BJ (cell line): ENCODE measurements at regions of chr4 and their contacts with region 1.

Region 1: GRCh38 chr4:67909905-67910584 is 26.2 kb upstream of the TMPRSS11D start:
- DNase-seq: no peak
- H3K4me3 ChIP-seq: no peak overlapping the region
- H3K27me3 ChIP-seq: no peaks in the 10 kb centered on the region
- CTCF ChIP-seq: peak; percentile 55

Region 2: GRCh38 chr4:67746797-67747495 is 163.1 kb before region 1 on chr4:
- CTCF ChIA-PET with region 1: no interaction called
- POLR2A ChIA-PET with region 1: no interaction called
- DNase-seq: no peak
- H3K4me3 ChIP-seq: no peak overlapping the region
- H3K27me3 ChIP-seq: no peaks in the 10 kb centered on the region
- CTCF ChIP-seq: peak; percentile 58

Region 3: DNA sequence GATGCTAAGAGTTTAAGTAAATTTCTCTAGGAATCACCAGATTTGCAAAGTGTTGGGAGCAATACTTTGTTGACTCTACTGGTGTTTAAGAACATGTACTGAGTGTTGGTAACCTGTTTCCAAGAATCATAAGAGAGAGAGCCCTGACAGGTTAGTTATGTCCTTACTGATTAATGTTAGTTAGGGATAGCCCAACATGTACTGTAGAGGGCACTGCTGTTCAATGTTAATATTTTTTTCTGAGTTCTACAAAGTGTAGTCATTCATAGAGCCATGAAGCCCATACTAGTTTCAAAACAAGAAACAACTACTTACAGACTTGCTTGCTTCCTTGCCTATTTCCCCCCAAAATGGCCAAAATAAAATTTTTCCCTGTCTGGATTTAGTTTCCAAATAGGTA is 38.2 kb before region 1 on chr4:
- CTCF ChIA-PET with region 1: interaction called, 23 read pairs
- POLR2A ChIA-PET with region 1: no interaction called
- DNase-seq: no peak
- H3K4me3 ChIP-seq: no peak overlapping the region
- H3K27me3 ChIP-seq: no peaks in the 10 kb centered on the region
- CTCF ChIP-seq: peak; percentile 61

Region 4: DNA sequence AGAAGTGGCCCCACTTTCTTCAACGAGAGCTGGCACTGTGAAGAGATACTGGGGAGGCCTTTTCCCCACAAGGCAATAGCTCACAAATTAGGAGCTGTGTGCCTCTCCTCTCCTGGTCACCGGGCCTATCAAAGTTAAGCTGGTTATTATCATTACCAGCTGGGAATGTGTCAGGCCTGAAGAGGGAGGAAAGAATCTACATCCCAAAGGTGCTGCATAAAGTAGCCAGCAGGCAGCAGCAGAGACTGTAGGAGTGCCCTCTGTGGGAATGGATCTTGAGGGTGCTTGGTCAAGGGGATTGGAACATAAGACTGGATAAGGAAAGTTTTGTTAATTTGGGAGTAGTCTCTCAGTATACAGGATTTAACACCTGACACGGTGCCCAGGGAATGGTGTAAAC is 17.1 kb before region 1 on chr4:
- CTCF ChIA-PET with region 1: interaction called, 27 read pairs
- POLR2A ChIA-PET with region 1: no interaction called
- DNase-seq: no peak
- H3K4me3 ChIP-seq: no peak overlapping the region
- H3K27me3 ChIP-seq: no peaks in the 10 kb centered on the region
- CTCF ChIP-seq: 0 out of 2 replicates have a peak, but pooled peaks have one; percentile 19

Region 5: DNA sequence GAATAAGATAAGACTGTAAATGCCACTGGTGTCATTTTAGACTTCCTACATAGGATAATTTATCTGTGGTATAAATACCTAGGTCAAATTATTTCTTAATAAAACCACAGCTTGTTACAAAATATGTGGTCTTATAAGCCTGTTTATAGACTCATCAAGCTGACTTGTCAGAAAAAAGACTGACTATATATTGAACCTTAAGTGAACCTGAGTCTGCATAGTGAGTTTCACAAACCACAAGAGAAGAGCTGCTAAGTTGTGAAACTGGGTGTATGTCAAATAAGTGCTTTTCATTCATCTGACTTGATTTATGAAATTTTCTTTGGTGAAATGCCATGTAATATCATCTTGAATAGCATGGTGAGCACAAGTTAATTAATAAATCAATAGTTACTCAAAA is 101.6 kb after region 1 on chr4:
- CTCF ChIA-PET with region 1: no interaction called
- POLR2A ChIA-PET with region 1: no interaction called
- DNase-seq: no peak
- H3K4me3 ChIP-seq: no peak overlapping the region
- H3K27me3 ChIP-seq: no peaks in the 10 kb centered on the region
- CTCF ChIP-seq: no peak

Region 6: DNA sequence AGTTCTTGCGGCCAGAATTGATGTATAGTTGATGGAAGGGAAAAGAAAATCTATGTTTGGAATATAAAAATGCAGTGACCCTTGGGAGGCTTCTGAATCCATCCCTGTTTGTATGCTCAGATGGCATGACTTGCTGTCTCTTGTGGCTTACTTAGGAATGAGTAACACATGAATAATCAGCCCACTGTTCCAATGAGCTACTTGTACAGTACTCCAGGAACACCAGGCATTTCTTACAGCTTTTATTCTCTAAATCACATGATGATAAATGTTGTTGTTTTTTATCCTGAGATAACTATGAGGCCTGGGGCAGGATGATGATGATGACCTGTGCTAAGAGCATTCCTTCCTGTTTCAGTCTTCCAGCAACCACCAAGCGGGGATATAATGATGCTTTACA is 556.1 kb after region 1 on chr4:
- CTCF ChIA-PET with region 1: no interaction called
- POLR2A ChIA-PET with region 1: no interaction called
- DNase-seq: peak; percentile 72
- H3K4me3 ChIP-seq: no peak overlapping the region
- H3K27me3 ChIP-seq: no peaks in the 10 kb centered on the region
- CTCF ChIP-seq: no peak

Region 7: DNA sequence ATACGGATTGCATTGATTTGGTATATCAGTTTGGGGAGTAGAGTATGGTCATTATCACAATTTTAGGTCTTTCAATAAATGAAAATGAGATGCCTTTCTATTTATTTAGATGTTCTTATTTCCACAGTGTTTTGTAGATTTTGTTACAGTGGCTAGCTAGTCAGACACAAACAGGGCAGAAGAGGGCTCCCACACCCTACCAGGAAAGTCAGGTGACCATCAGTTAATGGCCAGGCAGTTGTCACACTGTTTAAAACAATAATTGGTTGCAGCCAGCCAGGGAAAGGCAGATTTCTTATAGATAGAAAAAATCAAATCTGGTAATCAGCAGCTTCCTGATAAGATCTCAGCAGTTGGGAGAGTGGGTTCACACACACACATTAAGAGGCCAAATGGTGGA is 608.8 kb after region 1 on chr4:
- CTCF ChIA-PET with region 1: no interaction called
- POLR2A ChIA-PET with region 1: no interaction called
- DNase-seq: no peak
- H3K4me3 ChIP-seq: no peak overlapping the region
- H3K27me3 ChIP-seq: no peaks in the 10 kb centered on the region
- CTCF ChIP-seq: no peak